HEK293 (cell line): ENCODE measurements at regions of chr5 and their contacts with region 1.

Region 1: GRCh38 chr5:73215891-73216610 is 43.1 kb downstream of the TMEM174 start:
- H3K4me3 ChIP-seq: peak overlapping the region; percentile 53
- H3K27ac ChIP-seq: peak overlapping the region; percentile 80; the same call in 1 of the 2 replicates
- H3K4me1 ChIP-seq: peaks cover 11% of the 10 kb centered on the region
- CTCF ChIP-seq: peak; percentile 99

Region 2: GRCh38 chr5:71782771-71783770 is 1433.0 kb before region 1 on chr5:
- CTCF ChIA-PET with region 1: no interaction called
- POLR2A ChIA-PET with region 1: no interaction called
- H3K4me3 ChIP-seq: no peak overlapping the region
- H3K27ac ChIP-seq: no peak overlapping the region
- H3K4me1 ChIP-seq: no peaks in the 10 kb centered on the region
- CTCF ChIP-seq: 0 out of 2 replicates have a peak, but pooled peaks have one; percentile 46

Region 3: DNA sequence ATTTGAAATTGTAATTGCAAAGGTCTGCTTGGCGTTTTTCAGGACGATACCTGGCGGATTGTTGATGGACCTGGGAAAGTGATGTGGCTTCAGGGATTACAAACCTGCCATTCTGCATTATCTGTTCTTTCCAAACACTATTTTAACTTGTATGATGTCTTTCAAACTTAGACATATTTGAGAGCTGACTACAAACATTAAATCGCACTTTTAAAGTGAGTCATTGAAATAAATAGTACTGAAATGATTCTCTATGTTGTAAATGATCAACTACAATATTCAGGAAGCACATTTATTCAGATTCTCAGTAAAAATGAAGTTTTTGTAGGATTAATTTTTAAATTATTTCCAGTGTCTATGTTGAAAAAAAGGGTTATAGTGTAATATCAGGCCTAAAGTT is 128.0 kb before region 1 on chr5:
- CTCF ChIA-PET with region 1: interaction called, 15 read pairs
- POLR2A ChIA-PET with region 1: interaction called, 4 read pairs
- H3K4me3 ChIP-seq: no peak overlapping the region
- H3K27ac ChIP-seq: no peak overlapping the region
- H3K4me1 ChIP-seq: no peaks in the 10 kb centered on the region; the same call in 1 of the 2 replicates
- CTCF ChIP-seq: no peak

Region 4: DNA sequence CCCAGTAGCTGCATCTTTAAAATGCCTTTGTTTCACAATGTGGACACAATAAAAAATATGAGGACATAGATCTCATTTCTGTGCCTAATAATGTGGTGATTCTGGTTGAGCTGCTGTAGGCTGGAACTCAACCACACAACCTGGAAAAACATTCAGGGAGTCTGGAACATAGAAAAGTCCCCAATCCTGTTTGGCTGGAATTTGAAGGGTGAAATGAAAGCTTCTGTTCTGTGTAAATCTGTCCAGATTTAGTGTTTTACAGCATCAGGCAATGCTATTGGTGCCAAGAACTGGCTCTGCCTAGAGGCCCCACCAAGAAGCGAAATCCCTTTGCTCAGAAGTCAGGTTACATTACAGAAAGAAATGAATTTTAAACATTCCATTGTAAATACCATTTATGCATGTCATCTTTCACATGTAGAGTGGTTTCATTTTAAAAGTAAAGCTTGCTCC is 13.2 kb after region 1 on chr5:
- CTCF ChIA-PET with region 1: interaction called, 35 read pairs
- POLR2A ChIA-PET with region 1: interaction called, 9 read pairs
- H3K4me3 ChIP-seq: no peak overlapping the region
- H3K27ac ChIP-seq: no peak overlapping the region
- H3K4me1 ChIP-seq: no peaks in the 10 kb centered on the region
- CTCF ChIP-seq: no peak

Region 5: DNA sequence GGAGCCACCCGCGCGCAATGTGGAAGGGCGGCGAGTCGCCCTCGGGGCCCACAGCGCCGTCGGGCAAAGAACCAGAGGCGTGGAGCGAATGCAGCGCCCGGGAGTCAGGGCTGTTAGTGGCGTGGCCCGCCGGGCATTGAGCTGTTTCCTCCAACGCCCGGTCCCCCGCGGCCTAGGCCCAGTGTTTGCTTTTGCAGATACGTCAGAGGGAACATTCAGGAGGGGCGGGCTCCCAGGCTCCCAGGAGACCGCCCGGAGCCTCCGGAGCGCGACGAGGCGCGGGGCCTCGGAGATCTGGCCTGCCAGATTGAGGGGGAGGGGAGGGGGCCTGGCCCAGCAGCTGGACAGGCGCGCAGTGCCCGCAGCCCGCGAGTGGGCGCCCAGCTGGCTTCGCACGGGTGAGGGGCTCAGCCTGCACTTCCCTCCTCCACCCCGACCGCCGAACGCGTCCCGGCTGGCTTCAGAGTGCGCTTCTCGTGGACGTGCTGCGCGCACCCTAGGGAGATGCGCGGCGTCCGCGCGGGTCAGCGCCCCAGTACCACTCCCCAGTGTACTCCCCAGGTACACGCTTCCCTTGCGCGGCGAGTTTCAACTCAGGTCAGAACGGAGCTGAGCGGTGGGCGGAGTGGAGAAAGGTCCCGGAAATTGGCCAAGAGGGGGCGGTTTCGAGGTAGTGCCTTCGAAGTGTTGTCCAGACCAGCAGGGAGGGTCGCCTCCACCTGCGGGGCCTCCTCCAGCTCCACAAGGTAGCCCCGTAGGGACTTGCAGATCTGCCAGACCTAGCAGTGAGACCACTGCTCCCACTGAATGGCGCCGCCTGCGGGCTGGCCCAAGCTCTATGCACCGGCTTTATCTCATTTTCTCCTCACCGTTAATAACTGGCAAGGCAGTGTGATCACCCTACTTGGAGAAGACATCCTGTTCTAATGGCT is 87.4 kb after region 1 on chr5:
- CTCF ChIA-PET with region 1: interaction called, 12 read pairs
- POLR2A ChIA-PET with region 1: no interaction called
- H3K4me3 ChIP-seq: no peak overlapping the region
- H3K27ac ChIP-seq: no peak overlapping the region
- H3K4me1 ChIP-seq: no peaks in the 10 kb centered on the region; the same call in 1 of the 2 replicates
- CTCF ChIP-seq: no peak

Region 6: GRCh38 chr5:73399775-73400174 is 183.7 kb after region 1 on chr5:
- CTCF ChIA-PET with region 1: interaction called, 10 read pairs
- POLR2A ChIA-PET with region 1: no interaction called
- H3K4me3 ChIP-seq: no peak overlapping the region
- H3K27ac ChIP-seq: no peak overlapping the region
- H3K4me1 ChIP-seq: 0 out of 2 replicates have a peak, but pooled peaks cover 3% of the 10 kb centered on the region
- CTCF ChIP-seq: no peak

Region 7: GRCh38 chr5:73454351-73455036 is 238.4 kb after region 1 on chr5:
- CTCF ChIA-PET with region 1: interaction called, 56 read pairs
- POLR2A ChIA-PET with region 1: interaction called, 3 read pairs
- H3K4me3 ChIP-seq: no peak overlapping the region
- H3K27ac ChIP-seq: no peak overlapping the region
- H3K4me1 ChIP-seq: no peaks in the 10 kb centered on the region
- CTCF ChIP-seq: peak; percentile 53